GM12878 (cell line): ENCODE measurements at regions of chr3 and their contacts with region 1.

Region 1: DNA sequence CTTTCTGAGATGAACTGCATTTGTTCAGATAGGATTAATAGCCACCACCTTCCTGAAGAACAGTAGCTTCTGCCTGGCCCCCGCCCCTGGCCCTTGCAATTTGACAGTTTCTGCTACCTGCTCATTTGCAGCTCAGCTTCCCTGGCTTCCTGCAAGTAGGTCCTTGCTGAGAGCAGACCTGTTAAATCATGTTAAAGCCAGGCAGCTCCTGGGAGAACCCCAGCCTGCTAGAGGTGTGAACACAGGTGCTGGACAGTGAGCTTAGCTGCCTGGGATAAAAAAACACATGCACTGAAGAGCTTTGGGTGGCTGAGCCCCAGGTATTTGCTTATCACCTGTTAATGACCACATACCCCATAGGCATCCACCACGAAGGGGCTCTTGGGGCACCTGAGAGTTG is 143.4 kb downstream of the PTPRG start:
- DNase-seq: no peak
- ATAC-seq: peak; percentile 40
- H3K4me3 ChIP-seq: no peak overlapping the region
- H3K27ac ChIP-seq: no peak overlapping the region
- H3K4me1 ChIP-seq: no peaks in the 10 kb centered on the region
- H3K27me3 ChIP-seq: no peaks in the 10 kb centered on the region
- CTCF ChIP-seq: no peak
- EP300 ChIP-seq: no peak
- POLR2A ChIP-seq: no peak
- RAD21 ChIP-seq: no peak

Region 2: GRCh38 chr3:61537366-61537765 is 167.4 kb before region 1 on chr3:
- CTCF ChIA-PET with region 1: no interaction called
- POLR2A ChIA-PET with region 1: interaction called, 13 read pairs
- RAD21 ChIA-PET with region 1: no interaction called
- SMC1A ChIA-PET with region 1: no interaction called
- in situ Hi-C with region 1: no loop called
- intact Hi-C with region 1: no loop called
- DNase-seq: no peak
- ATAC-seq: no peak
- H3K4me3 ChIP-seq: no peak overlapping the region
- H3K27ac ChIP-seq: no peak overlapping the region
- H3K4me1 ChIP-seq: no peaks in the 10 kb centered on the region
- H3K27me3 ChIP-seq: no peaks in the 10 kb centered on the region; a peak in 1 of 4 replicates
- CTCF ChIP-seq: no peak
- EP300 ChIP-seq: no peak
- POLR2A ChIP-seq: no peak
- RAD21 ChIP-seq: no peak

Region 3: DNA sequence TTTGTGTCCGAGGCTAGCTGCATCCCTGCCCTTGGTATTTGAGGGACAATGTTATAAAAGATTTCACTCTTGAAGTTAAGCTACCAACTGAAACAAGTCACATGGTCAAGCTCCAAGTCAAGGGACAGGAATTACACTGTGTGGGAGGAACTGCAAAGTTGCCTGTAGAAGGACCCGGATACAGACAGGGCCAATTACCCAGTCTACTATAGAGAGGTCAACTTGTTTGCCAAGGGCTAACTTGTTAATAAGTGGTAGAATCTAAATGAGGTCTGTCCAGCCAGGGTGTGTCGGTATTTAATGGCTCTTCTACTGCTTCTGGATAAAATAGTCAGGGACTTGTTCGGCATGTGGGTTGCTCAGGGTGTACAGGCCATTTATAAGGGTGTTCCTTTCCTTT is 87.8 kb before region 1 on chr3:
- CTCF ChIA-PET with region 1: no interaction called
- POLR2A ChIA-PET with region 1: no interaction called
- RAD21 ChIA-PET with region 1: no interaction called
- SMC1A ChIA-PET with region 1: no interaction called
- in situ Hi-C with region 1: no loop called
- intact Hi-C with region 1: no loop called
- DNase-seq: no peak
- ATAC-seq: no peak
- H3K4me3 ChIP-seq: no peak overlapping the region
- H3K27ac ChIP-seq: no peak overlapping the region
- H3K4me1 ChIP-seq: no peaks in the 10 kb centered on the region
- H3K27me3 ChIP-seq: peaks cover 0 to 3% of the 10 kb centered on the region in 2 experiments; a peak in 2 of 4 replicates
- CTCF ChIP-seq: no peak
- EP300 ChIP-seq: no peak
- POLR2A ChIP-seq: no peak
- RAD21 ChIP-seq: no peak

Region 4: DNA sequence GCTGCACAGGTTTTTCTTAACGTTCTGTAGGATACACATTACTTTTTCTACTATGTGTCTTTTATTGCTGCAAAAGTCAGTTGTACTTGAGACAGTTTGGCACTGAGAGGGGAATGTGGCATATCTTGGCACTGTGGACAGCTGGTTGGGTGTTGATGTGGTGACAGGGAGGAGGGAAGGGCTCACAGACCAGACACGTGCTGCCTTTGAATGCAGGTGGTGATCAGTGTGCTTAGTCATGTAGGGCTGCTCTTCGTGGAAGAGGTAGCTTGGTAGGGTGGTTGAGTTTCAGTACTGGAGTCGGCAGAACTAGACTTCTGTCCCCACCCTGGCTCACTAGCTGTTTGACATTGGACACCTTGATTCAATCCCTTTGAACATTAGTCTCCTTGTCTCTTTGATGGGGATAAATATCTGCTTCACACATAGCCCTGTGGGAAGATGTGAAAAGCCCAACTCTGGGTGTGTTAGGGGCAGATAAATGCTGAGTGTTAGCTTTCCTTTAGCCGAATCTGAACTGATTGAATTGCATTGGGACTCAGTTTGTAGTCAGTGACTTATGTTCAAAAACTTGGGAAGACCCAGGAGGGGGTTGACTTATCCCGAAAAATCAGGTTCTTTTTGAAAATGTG is 35.0 kb before region 1 on chr3:
- CTCF ChIA-PET with region 1: interaction called, 4 read pairs
- POLR2A ChIA-PET with region 1: interaction called, 3 read pairs
- RAD21 ChIA-PET with region 1: interaction called, 30 read pairs
- SMC1A ChIA-PET with region 1: interaction called, 17 read pairs
- in situ Hi-C with region 1: no loop called
- intact Hi-C with region 1: no loop called
- DNase-seq: no peak
- ATAC-seq: peak; percentile 90
- H3K4me3 ChIP-seq: no peak overlapping the region
- H3K27ac ChIP-seq: no peak overlapping the region
- H3K4me1 ChIP-seq: no peaks in the 10 kb centered on the region
- H3K27me3 ChIP-seq: no peaks in the 10 kb centered on the region
- CTCF ChIP-seq: no peak
- EP300 ChIP-seq: no peak
- POLR2A ChIP-seq: no peak
- RAD21 ChIP-seq: no peak

Region 5: DNA sequence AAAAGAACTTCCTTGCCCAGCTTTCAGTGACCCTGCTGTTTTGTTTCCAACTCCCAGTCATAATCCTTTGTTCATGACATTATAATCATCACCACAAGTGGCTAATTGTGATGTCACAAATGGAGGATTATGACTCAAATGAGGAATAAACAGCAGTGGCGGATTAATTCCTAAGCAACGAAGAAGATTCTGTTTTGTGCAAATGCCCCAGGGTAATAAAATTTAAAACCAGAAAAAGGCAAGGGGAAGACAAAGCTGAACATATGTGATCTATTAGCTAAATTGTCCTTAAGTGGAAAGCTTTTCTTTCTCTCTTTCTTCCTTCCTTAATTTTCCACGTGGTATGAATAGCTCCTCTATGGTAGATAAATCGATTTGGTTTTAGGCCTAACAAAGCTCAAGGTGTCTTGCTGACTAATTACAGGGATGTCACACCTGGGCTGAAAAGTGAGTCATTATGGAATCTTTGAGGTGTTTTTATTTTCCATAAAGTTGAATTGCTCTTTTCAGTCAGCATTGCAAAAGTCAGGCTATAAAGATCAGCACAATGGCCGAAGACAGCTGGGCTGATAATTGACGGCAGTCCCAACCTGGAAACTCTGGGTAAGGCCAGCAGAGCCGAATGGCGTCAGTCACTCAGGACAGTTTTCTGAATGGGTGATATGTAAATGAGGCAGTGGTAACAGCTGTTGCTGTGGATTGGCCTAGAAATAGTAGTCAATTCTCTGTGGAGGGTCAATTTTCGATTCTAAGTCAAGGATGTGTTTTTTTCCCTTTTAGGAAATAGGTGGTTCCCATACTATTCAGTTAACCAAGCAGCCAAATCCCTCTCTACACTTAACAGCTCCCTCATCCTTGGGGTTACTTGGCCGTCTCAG is 21.9 kb before region 1 on chr3:
- CTCF ChIA-PET with region 1: interaction called, 6 read pairs
- POLR2A ChIA-PET with region 1: interaction called, 11 read pairs
- RAD21 ChIA-PET with region 1: interaction called, 5 read pairs
- SMC1A ChIA-PET with region 1: interaction called, 20 read pairs
- in situ Hi-C with region 1: no loop called
- intact Hi-C with region 1: no loop called
- DNase-seq: no peak
- ATAC-seq: peak; percentile 57
- H3K4me3 ChIP-seq: no peak overlapping the region
- H3K27ac ChIP-seq: no peak overlapping the region
- H3K4me1 ChIP-seq: no peaks in the 10 kb centered on the region
- H3K27me3 ChIP-seq: no peaks in the 10 kb centered on the region; a peak in 1 of 4 replicates
- CTCF ChIP-seq: no peak
- EP300 ChIP-seq: 0 out of 4 replicates have a peak, but pooled peaks of 1 of the 2 experiments have one; percentile 51
- POLR2A ChIP-seq: no peak
- RAD21 ChIP-seq: no peak

Region 6: GRCh38 chr3:61688307-61688984 is 16.4 kb before region 1 on chr3:
- CTCF ChIA-PET with region 1: interaction called, 6 read pairs
- POLR2A ChIA-PET with region 1: interaction called, 6 read pairs
- RAD21 ChIA-PET with region 1: interaction called, 4 read pairs
- SMC1A ChIA-PET with region 1: interaction called, 16 read pairs
- in situ Hi-C with region 1: no loop called
- intact Hi-C with region 1: no loop called
- DNase-seq: no peak
- ATAC-seq: no peak
- H3K4me3 ChIP-seq: no peak overlapping the region
- H3K27ac ChIP-seq: no peak overlapping the region
- H3K4me1 ChIP-seq: no peaks in the 10 kb centered on the region
- H3K27me3 ChIP-seq: no peaks in the 10 kb centered on the region; a peak in 2 of 4 replicates
- CTCF ChIP-seq: no peak
- EP300 ChIP-seq: no peak
- POLR2A ChIP-seq: no peak
- RAD21 ChIP-seq: no peak

Region 7: GRCh38 chr3:61718565-61718964 is 13.8 kb after region 1 on chr3:
- CTCF ChIA-PET with region 1: interaction called, 9 read pairs
- POLR2A ChIA-PET with region 1: interaction called, 5 read pairs
- RAD21 ChIA-PET with region 1: interaction called, 4 read pairs
- SMC1A ChIA-PET with region 1: interaction called, 18 read pairs
- in situ Hi-C with region 1: no loop called
- intact Hi-C with region 1: no loop called
- DNase-seq: no peak
- ATAC-seq: no peak
- H3K4me3 ChIP-seq: no peak overlapping the region
- H3K27ac ChIP-seq: no peak overlapping the region
- H3K4me1 ChIP-seq: no peaks in the 10 kb centered on the region
- H3K27me3 ChIP-seq: peaks cover 0 to 2% of the 10 kb centered on the region in 2 experiments; a peak in 1 of 4 replicates
- CTCF ChIP-seq: no peak
- EP300 ChIP-seq: no peak
- POLR2A ChIP-seq: no peak
- RAD21 ChIP-seq: no peak